ENCODE measurements at regions of chr11 and their contacts with region 1.

Region 1: DNA sequence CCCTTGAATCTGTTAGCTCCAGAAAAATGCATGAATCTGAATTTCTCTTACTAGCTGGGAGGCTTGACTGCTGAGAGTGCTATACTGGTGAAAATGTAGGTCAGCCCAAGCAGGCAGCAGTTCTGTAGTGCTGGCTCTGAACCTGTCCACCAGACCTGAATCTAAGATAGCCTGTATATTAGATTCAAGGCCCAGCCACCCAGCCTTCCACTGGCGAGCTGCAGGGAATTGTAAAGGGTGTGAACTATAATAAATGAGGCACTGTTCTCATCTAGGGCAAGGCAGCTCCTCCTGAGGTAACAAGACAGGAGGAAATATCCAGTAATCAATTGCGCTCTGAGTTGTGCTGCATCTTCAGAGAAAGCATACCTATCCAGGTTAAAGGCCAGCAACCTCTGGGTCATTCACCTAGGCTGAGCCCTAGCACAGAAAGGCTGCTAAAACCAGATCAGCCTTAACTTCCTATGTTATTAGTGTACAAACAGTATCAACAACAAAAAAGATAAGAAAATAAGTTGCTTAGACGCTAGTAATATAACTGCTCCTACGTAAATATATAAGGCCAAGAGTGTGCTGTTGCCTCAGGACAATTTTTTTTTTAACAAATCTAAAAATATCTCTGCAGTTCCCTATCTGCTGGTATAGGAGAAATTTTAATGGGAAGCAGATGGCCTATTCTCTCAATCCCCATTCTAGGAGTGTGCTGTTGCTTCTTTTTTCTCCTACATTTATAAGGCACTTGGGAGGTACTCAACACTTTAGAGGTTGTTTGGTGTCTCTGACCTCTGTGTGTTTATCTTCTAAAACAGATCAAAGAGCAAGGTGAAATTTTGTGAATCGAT is 63.0 kb downstream of the RELT start:
- DNase-seq: peak; percentile 21
- H3K4me3 ChIP-seq: no peak overlapping the region
- H3K27me3 ChIP-seq: no peaks in the 10 kb centered on the region
- CTCF ChIP-seq: no peak

Region 2: GRCh38 chr11:73184953-73185671 is 254.1 kb before region 1 on chr11:
- CTCF ChIA-PET with region 1: no interaction called
- POLR2A ChIA-PET with region 1: no interaction called
- DNase-seq: no peak
- H3K4me3 ChIP-seq: no peak overlapping the region
- H3K27me3 ChIP-seq: no peaks in the 10 kb centered on the region; the same call in 1 of the 2 replicates
- CTCF ChIP-seq: peak; percentile 90

Region 3: GRCh38 chr11:73376160-73376802 is 62.9 kb before region 1 on chr11 and contains the start of gene RELT:
- CTCF ChIA-PET with region 1: no interaction called
- POLR2A ChIA-PET with region 1: interaction called, 15 read pairs
- DNase-seq: peak; percentile 34
- H3K4me3 ChIP-seq: peak within 1 kb of the TSS; percentile 70
- H3K27me3 ChIP-seq: no peaks in the 10 kb centered on the region
- CTCF ChIP-seq: peak; percentile 80
- polyA plus RNA-seq, gene RELT: 2.4 and 3.7 TPM in 2 replicates